Caco-2 (cell line): ENCODE measurements at regions of chr5 and their contacts with region 1.

Region 1: GRCh38 chr5:7261049-7261448 is 134.9 kb upstream of the ADCY2 start:
- DNase-seq: peak; percentile 36 to 37
- H3K4me3 ChIP-seq: no peak overlapping the region
- H3K4me3 Mint-ChIP-seq: no peak overlapping the region
- H3K27ac Mint-ChIP-seq: no peak overlapping the region
- H3K4me1 ChIP-seq: no peaks in the 10 kb centered on the region
- H3K4me1 Mint-ChIP-seq: no peaks in the 10 kb centered on the region
- H3K27me3 ChIP-seq: no peaks in the 10 kb centered on the region
- H3K27me3 Mint-ChIP-seq: peaks cover 15% of the 10 kb centered on the region
- CTCF ChIP-seq: peak; percentile 45 to 58

Region 2: GRCh38 chr5:6692906-6693305 is 568.1 kb before region 1 on chr5:
- CTCF ChIA-PET with region 1: no interaction called
- POLR2A ChIA-PET with region 1: no interaction called
- intact Hi-C with region 1: no loop called
- DNase-seq: no peak
- H3K4me3 ChIP-seq: no peak overlapping the region
- H3K4me3 Mint-ChIP-seq: no peak overlapping the region
- H3K27ac Mint-ChIP-seq: no peak overlapping the region
- H3K4me1 ChIP-seq: no peaks in the 10 kb centered on the region
- H3K4me1 Mint-ChIP-seq: no peaks in the 10 kb centered on the region
- H3K27me3 ChIP-seq: no peaks in the 10 kb centered on the region
- H3K27me3 Mint-ChIP-seq: peaks cover 9% of the 10 kb centered on the region
- CTCF ChIP-seq: no peak

Region 3: GRCh38 chr5:7078901-7079300 is 182.1 kb before region 1 on chr5:
- CTCF ChIA-PET with region 1: no interaction called
- POLR2A ChIA-PET with region 1: no interaction called
- intact Hi-C with region 1: loop called (anchors 5 kb)
- DNase-seq: peak in 1 of 2 experiments; percentile 19
- H3K4me3 ChIP-seq: no peak overlapping the region
- H3K4me3 Mint-ChIP-seq: no peak overlapping the region
- H3K27ac Mint-ChIP-seq: no peak overlapping the region
- H3K4me1 ChIP-seq: no peaks in the 10 kb centered on the region
- H3K4me1 Mint-ChIP-seq: no peaks in the 10 kb centered on the region
- H3K27me3 ChIP-seq: no peaks in the 10 kb centered on the region
- H3K27me3 Mint-ChIP-seq: no peaks in the 10 kb centered on the region
- CTCF ChIP-seq: peak; percentile 31 to 57

Region 4: GRCh38 chr5:7391814-7392692 is 131.0 kb after region 1 on chr5:
- CTCF ChIA-PET with region 1: interaction called, 3 read pairs
- POLR2A ChIA-PET with region 1: no interaction called
- intact Hi-C with region 1: loop called (anchors 1 kb)
- DNase-seq: peak in 1 of 2 experiments; percentile 33
- H3K4me3 ChIP-seq: no peak overlapping the region
- H3K4me3 Mint-ChIP-seq: no peak overlapping the region
- H3K27ac Mint-ChIP-seq: no peak overlapping the region
- H3K4me1 ChIP-seq: no peaks in the 10 kb centered on the region
- H3K4me1 Mint-ChIP-seq: no peaks in the 10 kb centered on the region
- H3K27me3 ChIP-seq: no peaks in the 10 kb centered on the region
- H3K27me3 Mint-ChIP-seq: peaks cover 12% of the 10 kb centered on the region
- CTCF ChIP-seq: peak; percentile 32 to 65

Region 5: DNA sequence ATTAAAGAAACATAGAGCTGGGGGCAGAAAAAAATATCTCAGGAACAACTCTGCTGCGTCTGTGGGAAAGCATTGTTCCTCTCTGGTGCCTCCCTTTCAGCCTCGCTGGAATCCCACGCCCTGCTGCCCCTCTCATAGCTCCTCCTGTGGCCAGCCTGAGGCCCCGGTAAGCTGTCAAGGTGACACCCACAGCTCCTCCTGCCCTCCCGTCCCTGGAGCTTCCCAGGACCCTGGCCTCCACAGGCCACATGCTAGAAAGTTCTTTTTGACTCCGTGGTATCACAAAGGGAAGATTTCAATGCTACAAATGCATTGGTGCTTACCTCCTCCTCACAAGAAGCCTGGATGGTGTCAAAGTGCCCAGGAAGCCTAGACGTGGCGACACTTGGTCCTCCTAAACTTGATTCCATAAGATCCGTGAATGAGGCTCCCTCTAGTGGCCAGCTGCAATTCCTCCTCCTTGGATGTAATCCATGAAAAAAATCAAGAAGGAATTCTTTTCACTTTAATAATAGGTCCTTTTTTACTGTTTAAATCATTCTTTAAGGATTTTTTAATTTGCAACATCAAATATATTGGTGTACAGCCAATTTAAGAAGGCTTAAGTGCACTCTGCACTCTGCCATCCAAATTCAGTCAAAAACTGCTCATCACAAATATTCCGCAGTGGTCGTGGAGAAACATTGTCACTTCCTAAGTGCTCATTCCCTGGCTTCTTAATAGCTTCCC is 485.0 kb after region 1 on chr5:
- CTCF ChIA-PET with region 1: no interaction called
- POLR2A ChIA-PET with region 1: no interaction called
- intact Hi-C with region 1: loop called (anchors 1 kb)
- DNase-seq: peak; percentile 72 to 77
- H3K4me3 ChIP-seq: no peak overlapping the region
- H3K4me3 Mint-ChIP-seq: no peak overlapping the region
- H3K27ac Mint-ChIP-seq: no peak overlapping the region
- H3K4me1 ChIP-seq: no peaks in the 10 kb centered on the region
- H3K4me1 Mint-ChIP-seq: no peaks in the 10 kb centered on the region
- H3K27me3 ChIP-seq: no peaks in the 10 kb centered on the region
- H3K27me3 Mint-ChIP-seq: peaks cover 16% of the 10 kb centered on the region
- CTCF ChIP-seq: peak; percentile 76 to 89

Region 6: GRCh38 chr5:7754992-7755596 is 494.0 kb after region 1 on chr5:
- CTCF ChIA-PET with region 1: no interaction called
- POLR2A ChIA-PET with region 1: no interaction called
- intact Hi-C with region 1: loop called (anchors 2 kb)
- DNase-seq: peak; percentile 58 to 73
- H3K4me3 ChIP-seq: no peak overlapping the region
- H3K4me3 Mint-ChIP-seq: no peak overlapping the region
- H3K27ac Mint-ChIP-seq: no peak overlapping the region
- H3K4me1 ChIP-seq: no peaks in the 10 kb centered on the region
- H3K4me1 Mint-ChIP-seq: no peaks in the 10 kb centered on the region
- H3K27me3 ChIP-seq: no peaks in the 10 kb centered on the region
- H3K27me3 Mint-ChIP-seq: peaks cover 28% of the 10 kb centered on the region
- CTCF ChIP-seq: peak; percentile 82 to 84

Region 7: DNA sequence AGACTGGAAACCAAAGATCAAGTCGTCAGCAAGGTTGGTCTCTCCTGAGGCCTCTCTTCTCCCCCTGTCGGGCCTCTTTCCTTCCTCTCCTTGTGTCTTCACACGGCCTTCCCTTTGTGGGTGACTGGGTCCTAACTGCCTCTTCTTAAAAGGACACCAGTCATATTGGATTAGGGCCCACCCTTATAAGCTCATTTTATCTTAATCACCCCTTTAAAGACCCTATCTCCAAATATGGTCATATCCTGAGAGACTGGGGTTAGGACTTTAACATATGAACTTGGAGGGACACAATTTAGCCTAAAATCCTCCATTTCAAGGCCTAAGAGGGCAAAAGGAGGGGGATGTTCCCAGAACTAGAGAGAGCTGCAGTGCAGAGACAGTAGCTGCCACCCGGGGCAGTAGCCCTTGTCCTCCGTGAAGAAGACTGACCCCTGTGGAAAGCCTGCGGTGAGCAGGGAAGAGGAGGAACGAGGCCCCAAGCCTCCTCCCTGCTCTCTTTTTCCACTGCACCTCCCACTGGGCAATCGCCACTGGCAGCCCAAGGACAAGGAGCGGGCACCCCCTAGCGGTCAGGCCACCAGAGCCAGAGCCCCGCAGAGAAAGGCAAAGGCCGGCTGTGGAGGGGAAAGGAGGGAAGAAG is 555.0 kb after region 1 on chr5:
- CTCF ChIA-PET with region 1: no interaction called
- POLR2A ChIA-PET with region 1: no interaction called
- intact Hi-C with region 1: loop called (anchors 1 kb)
- DNase-seq: peak; percentile 72 to 83
- H3K4me3 ChIP-seq: no peak overlapping the region
- H3K4me3 Mint-ChIP-seq: no peak overlapping the region
- H3K27ac Mint-ChIP-seq: no peak overlapping the region
- H3K4me1 ChIP-seq: no peaks in the 10 kb centered on the region
- H3K4me1 Mint-ChIP-seq: no peaks in the 10 kb centered on the region
- H3K27me3 ChIP-seq: no peaks in the 10 kb centered on the region; the same call in 1 of the 2 replicates
- H3K27me3 Mint-ChIP-seq: peaks cover 24% of the 10 kb centered on the region
- CTCF ChIP-seq: peak; percentile 77 to 91